A673 (cell line): ENCODE measurements at regions of chr5 and their contacts with region 1.

Region 1: GRCh38 chr5:149828161-149828884 is 98.2 kb downstream of the PPARGC1B start:
- DNase-seq: peak; percentile 92
- H3K4me3 ChIP-seq: no peak overlapping the region
- H3K27ac ChIP-seq: no peak overlapping the region
- H3K4me1 ChIP-seq: peaks cover 4% of the 10 kb centered on the region
- H3K27me3 ChIP-seq: no peaks in the 10 kb centered on the region
- CTCF ChIP-seq: peak; percentile 91

Region 2: GRCh38 chr5:148002466-148002865 is 1825.9 kb before region 1 on chr5:
- CTCF ChIA-PET with region 1: interaction called, 10 read pairs
- POLR2A ChIA-PET with region 1: no interaction called
- intact Hi-C with region 1: no loop called
- DNase-seq: no peak
- H3K4me3 ChIP-seq: no peak overlapping the region
- H3K27ac ChIP-seq: no peak overlapping the region
- H3K4me1 ChIP-seq: no peaks in the 10 kb centered on the region
- H3K27me3 ChIP-seq: no peaks in the 10 kb centered on the region
- CTCF ChIP-seq: no peak

Region 3: GRCh38 chr5:149636851-149637246 is 191.5 kb before region 1 on chr5:
- CTCF ChIA-PET with region 1: interaction called, 8 read pairs
- POLR2A ChIA-PET with region 1: no interaction called
- intact Hi-C with region 1: loop called (anchors 1 kb)
- DNase-seq: peak; percentile 89
- H3K4me3 ChIP-seq: no peak overlapping the region
- H3K27ac ChIP-seq: no peak overlapping the region
- H3K4me1 ChIP-seq: no peaks in the 10 kb centered on the region
- H3K27me3 ChIP-seq: no peaks in the 10 kb centered on the region
- CTCF ChIP-seq: peak; percentile 97

Region 4: DNA sequence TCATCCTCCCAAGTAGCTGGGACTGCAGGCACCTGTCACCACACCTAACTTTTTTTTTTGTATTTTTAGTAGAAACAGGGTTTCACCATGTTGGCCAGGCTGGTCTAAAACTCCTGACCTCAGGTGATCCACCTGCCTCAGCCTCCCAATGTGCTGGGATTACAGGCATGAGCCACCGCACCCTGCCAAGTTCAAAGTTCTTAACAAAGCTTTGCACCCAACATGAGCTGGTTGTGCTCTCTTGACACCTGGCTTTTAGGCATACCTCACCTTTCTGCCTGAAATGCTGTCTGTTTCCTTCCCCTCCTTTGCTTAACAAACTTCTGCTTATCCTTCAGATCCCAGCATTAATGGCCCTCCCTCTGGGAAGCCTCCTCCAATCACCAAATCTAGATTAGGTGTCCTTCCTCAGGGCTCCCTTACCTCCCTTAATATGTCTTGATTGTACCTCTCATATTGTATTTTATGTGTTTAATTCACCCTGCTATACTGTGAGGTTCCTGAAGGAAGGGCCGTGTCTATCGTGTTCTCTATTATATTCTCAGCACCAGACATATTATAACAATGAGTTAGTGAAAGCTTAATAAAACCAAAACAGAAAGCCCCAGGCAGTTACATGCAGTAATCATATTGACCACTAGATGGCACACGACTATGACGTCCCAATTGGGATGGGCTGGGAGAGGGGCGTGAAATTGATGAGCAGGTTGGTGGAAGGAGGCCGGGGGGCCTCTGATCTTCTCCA is 161.1 kb before region 1 on chr5:
- CTCF ChIA-PET with region 1: interaction called, 18 read pairs
- POLR2A ChIA-PET with region 1: no interaction called
- intact Hi-C with region 1: no loop called
- DNase-seq: peak; percentile 63
- H3K4me3 ChIP-seq: no peak overlapping the region
- H3K27ac ChIP-seq: no peak overlapping the region
- H3K4me1 ChIP-seq: peaks cover 4% of the 10 kb centered on the region
- H3K27me3 ChIP-seq: no peaks in the 10 kb centered on the region
- CTCF ChIP-seq: peak; percentile 95

Region 5: GRCh38 chr5:149697001-149697400 is 131.3 kb before region 1 on chr5:
- CTCF ChIA-PET with region 1: interaction called, 14 read pairs
- POLR2A ChIA-PET with region 1: no interaction called
- intact Hi-C with region 1: no loop called
- DNase-seq: no peak
- H3K4me3 ChIP-seq: no peak overlapping the region
- H3K27ac ChIP-seq: no peak overlapping the region
- H3K4me1 ChIP-seq: no peaks in the 10 kb centered on the region
- H3K27me3 ChIP-seq: peaks cover 20% of the 10 kb centered on the region
- CTCF ChIP-seq: no peak